Aorta (tissue), 5 donors: ENCODE measurements at regions of chr15 and their contacts with region 1.

Region 1: GRCh38 chr15:48645558-48646330 is at the start of gene FBN1:
- DNase-seq: peak; percentile 84 to 91
- ATAC-seq: peak; percentile 93
- H3K4me3 ChIP-seq: peak within 1 kb of the TSS; percentile 61 to 62
- H3K27ac ChIP-seq: peak within 1 kb of the TSS; percentile 62 to 89
- H3K4me1 ChIP-seq: no peaks in the 10 kb centered on the region
- H3K27me3 ChIP-seq: no peaks in the 10 kb centered on the region
- total RNA-seq, gene FBN1: 167 to 529 TPM

Region 2: DNA sequence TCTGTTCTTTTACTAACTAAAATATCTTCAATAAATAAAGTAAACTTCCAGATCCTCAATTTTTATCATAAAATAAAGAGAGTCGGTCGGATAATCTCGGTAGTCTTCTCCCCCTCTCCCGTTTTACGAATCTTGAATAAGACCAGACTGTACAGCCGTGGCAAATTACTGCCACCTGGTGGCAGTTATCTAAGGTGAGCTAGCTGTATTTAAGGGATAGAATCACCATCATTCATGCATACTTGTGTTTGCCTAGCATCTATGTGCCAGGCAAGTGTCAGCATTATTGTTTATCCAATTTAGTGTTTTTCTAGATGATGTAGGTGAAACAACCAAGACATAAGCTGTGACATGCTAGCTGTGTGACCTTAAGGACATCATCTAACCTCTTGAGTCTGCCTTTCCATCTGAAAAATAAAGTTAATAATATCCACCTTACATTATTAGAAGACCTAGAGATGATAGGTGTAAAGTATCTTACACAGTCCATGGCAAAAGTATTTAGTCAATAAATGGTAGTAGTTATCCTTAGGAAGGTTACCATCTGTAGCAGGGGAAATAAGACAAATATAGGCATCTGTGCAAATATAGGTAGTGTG is 293.2 kb before region 1 on chr15:
- intact Hi-C with region 1: loop called (anchors 10 kb)
- DNase-seq: peak in 1 of 2 donors; percentile 57
- ATAC-seq: no peak
- H3K4me3 ChIP-seq: no peak overlapping the region
- H3K27ac ChIP-seq: no peak overlapping the region
- H3K4me1 ChIP-seq: no peaks in the 10 kb centered on the region
- H3K27me3 ChIP-seq: no peaks in the 10 kb centered on the region

Region 3: DNA sequence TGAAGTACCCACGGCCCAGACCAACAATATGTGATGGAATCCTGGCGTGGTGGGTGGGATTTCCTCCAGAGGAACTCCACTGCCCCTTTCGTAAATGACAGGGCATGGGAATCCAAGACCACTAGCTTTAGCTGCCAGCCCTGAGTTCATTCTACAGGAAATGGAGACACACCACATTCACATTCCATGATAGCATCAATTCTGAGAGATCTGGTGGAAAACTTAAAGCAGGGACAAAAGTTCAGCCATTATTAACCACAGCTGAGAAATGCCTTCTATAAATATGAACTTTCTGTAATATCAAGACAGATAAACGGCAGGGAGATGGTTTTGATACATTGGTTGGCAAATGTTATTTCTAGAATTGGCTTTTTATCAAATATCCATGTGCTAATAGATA is 98.5 kb before region 1 on chr15:
- intact Hi-C with region 1: loop called in 1 of 2 experiments (anchors 5 kb)
- DNase-seq: no peak
- ATAC-seq: no peak
- H3K4me3 ChIP-seq: no peak overlapping the region
- H3K27ac ChIP-seq: peak overlapping the region in 1 of 2 donors; percentile 66
- H3K4me1 ChIP-seq: peaks cover 0 to 8% of the 10 kb centered on the region in 2 donors
- H3K27me3 ChIP-seq: no peaks in the 10 kb centered on the region

Region 4: GRCh38 chr15:48602358-48603122 is 43.2 kb before region 1 on chr15:
- intact Hi-C with region 1: loop called in 1 of 2 experiments (anchors 5 kb)
- DNase-seq: no peak
- ATAC-seq: peak; percentile 58
- H3K4me3 ChIP-seq: peak overlapping the region in 1 of 2 donors; percentile 34
- H3K27ac ChIP-seq: peak overlapping the region in 1 of 2 donors; percentile 89
- H3K4me1 ChIP-seq: peaks cover 1 to 2% of the 10 kb centered on the region in 2 donors
- H3K27me3 ChIP-seq: no peaks in the 10 kb centered on the region

Region 5: GRCh38 chr15:48710952-48711495 is 65.3 kb after region 1 on chr15:
- intact Hi-C with region 1: no loop called
- DNase-seq: no peak
- ATAC-seq: no peak
- H3K4me3 ChIP-seq: no peak overlapping the region
- H3K27ac ChIP-seq: no peak overlapping the region
- H3K4me1 ChIP-seq: no peaks in the 10 kb centered on the region
- H3K27me3 ChIP-seq: no peaks in the 10 kb centered on the region

Region 6: DNA sequence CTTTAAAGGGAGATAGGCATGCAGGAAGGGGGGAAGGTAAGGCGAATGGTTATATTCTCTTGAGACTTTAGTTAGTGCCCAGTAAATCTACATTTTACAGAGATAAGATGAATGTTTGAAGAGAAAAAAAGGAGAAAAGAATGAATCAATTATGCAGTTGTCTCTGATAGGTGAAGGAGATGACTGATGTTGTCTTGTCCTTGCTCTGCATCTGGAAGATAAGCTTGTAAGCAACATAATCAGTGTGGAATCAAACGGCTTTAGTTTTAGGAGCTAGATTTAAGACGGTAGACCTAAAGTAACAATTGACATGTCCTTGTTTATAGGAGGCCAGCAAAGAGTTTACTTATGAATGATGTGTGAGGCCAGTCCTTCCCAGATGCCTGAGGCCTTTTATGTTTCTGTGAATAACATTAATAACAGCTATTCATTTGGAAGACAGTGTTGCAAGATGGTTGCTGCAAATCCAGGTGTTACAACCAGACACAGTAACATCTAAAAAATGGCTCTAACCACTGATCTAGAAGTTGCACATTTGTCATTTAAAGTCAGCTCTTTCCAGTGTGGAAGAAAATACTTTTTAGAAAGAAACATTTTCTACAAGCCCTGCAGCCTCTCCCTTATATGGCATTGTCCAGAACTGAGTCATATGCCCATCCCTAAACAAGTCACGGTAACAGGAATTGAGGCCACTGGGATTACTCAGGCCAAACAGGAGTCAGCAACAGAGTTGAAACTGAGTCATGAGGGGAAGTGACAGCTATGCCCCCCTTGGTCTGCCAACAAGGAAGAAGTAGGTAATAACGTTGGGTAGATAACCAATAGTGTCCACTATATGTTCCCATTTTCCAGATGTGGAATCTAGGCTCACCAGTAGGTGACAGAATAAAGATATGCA is 77.3 kb after region 1 on chr15:
- intact Hi-C with region 1: no loop called
- DNase-seq: peak in 1 of 2 donors; percentile 50
- ATAC-seq: no peak
- H3K4me3 ChIP-seq: no peak overlapping the region
- H3K27ac ChIP-seq: no peak overlapping the region
- H3K4me1 ChIP-seq: no peaks in the 10 kb centered on the region
- H3K27me3 ChIP-seq: no peaks in the 10 kb centered on the region

Region 7: GRCh38 chr15:48810414-48811317 is 164.9 kb after region 1 on chr15 and contains the start of gene CEP152:
- intact Hi-C with region 1: loop called in 1 of 2 experiments (anchors 5 kb)
- DNase-seq: peak; percentile 98 to 99
- ATAC-seq: peak; percentile 98
- H3K4me3 ChIP-seq: peak within 1 kb of the TSS; percentile 55 to 72
- H3K27ac ChIP-seq: no peak within 1 kb of the TSS
- H3K4me1 ChIP-seq: no peaks in the 10 kb centered on the region
- H3K27me3 ChIP-seq: no peaks in the 10 kb centered on the region
- total RNA-seq, gene CEP152: 5.2 to 7.6 TPM